Heart left ventricle (tissue), 16 donors: ENCODE measurements at regions of chr3 and their contacts with region 1.

Region 1: GRCh38 chr3:159252772-159253384 is 451.0 kb downstream of the MFSD1 start:
- DNase-seq: no peak
- ATAC-seq: no peak
- H3K4me3 ChIP-seq: no peak overlapping the region
- H3K27ac ChIP-seq: no peak overlapping the region
- H3K4me1 ChIP-seq: no peaks in the 10 kb centered on the region
- H3K27me3 ChIP-seq: no peaks in the 10 kb centered on the region
- CTCF ChIP-seq: peak in 9 of 12 donors; percentile 18 to 41 (median 32)
- POLR2A ChIP-seq: no peak

Region 2: DNA sequence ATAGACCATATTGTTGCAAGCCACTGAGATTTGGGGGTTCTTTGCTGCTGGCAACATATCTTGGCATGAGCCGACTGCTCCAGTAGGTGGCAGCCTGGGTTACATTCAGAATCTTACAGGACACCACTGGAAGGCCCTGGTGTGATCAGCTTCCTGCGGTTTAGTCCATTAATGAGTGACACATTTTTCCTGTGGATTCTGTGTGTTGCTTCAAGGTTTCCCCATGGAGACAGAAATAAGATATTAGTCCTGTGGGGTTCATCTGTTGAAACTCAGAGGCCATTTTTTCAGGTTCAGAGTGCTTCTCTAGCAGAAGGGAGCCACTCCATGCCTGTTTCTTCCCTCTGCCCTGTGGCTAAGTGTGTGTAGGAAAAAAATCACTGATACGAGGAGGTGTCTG is 334.9 kb before region 1 on chr3:
- intact Hi-C with region 1: loop called in 8 of 10 experiments (anchors 2 to 5 kb)
- DNase-seq: peak in 1 of 5 donors; percentile 38
- ATAC-seq: peak in 3 of 4 donors; percentile 49 to 67 (median 56)
- H3K4me3 ChIP-seq: no peak overlapping the region
- H3K27ac ChIP-seq: no peak overlapping the region
- H3K4me1 ChIP-seq: no peaks in the 10 kb centered on the region
- H3K27me3 ChIP-seq: no peaks in the 10 kb centered on the region
- CTCF ChIP-seq: peak; percentile 9 to 57 (median 43)
- POLR2A ChIP-seq: no peak

Region 3: DNA sequence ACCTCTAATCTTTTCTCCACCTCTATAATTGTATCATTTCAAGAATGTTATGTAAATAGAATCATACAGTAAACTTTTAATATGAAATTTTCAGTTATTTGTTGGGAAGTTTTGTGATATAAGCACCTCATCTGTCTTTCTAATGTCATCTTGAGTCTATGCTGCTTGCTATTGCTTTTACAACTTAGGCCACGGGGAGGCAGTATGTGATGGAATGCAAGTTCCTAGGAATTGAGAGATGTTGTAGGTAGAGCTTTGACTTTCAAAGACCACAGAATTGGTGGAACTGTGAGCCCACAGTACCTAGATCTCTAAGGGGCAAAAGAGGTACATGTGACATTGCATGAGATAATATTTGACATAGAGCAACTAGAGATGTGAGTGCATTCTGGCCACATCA is 122.8 kb before region 1 on chr3:
- intact Hi-C with region 1: loop called in 1 of 10 experiments (anchors 10 kb)
- DNase-seq: no peak
- ATAC-seq: no peak
- H3K4me3 ChIP-seq: no peak overlapping the region
- H3K27ac ChIP-seq: no peak overlapping the region
- H3K4me1 ChIP-seq: no peaks in the 10 kb centered on the region
- H3K27me3 ChIP-seq: no peaks in the 10 kb centered on the region
- CTCF ChIP-seq: peak in 4 of 12 donors; percentile 13 to 22 (median 17)
- POLR2A ChIP-seq: no peak

Region 4: DNA sequence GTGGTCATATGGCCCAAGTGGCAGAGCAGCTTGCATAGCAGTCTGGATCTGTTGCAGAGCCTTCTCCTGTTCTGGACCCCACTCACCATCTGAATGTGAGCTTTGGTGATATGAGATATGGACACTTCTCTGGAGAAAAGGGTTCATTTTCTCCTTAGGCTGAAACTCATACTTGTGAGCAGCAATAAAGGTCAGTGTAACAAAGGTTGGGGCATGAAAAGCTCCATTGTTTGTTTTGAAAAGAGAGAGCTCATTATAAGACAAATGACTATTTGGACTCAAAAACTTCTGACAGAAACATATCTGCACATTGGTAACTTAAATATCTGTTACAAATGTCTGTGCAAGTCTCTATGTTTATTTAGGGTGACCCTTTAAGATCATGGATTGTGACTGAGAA is 66.3 kb after region 1 on chr3:
- intact Hi-C with region 1: no loop called
- DNase-seq: no peak
- ATAC-seq: no peak
- H3K4me3 ChIP-seq: no peak overlapping the region
- H3K27ac ChIP-seq: no peak overlapping the region
- H3K4me1 ChIP-seq: no peaks in the 10 kb centered on the region
- H3K27me3 ChIP-seq: no peaks in the 10 kb centered on the region
- CTCF ChIP-seq: no peak
- POLR2A ChIP-seq: no peak